ENCODE measurements at regions of chr1 and their contacts with region 1.

Region 1: GRCh38 chr1:76154206-76154956 is 79.8 kb downstream of the ST6GALNAC3 start:
- DNase-seq: peak; percentile 3
- H3K4me3 ChIP-seq: no peak overlapping the region
- H3K27ac ChIP-seq: no peak overlapping the region
- H3K27me3 ChIP-seq: no peaks in the 10 kb centered on the region
- CTCF ChIP-seq: peak; percentile 92

Region 2: DNA sequence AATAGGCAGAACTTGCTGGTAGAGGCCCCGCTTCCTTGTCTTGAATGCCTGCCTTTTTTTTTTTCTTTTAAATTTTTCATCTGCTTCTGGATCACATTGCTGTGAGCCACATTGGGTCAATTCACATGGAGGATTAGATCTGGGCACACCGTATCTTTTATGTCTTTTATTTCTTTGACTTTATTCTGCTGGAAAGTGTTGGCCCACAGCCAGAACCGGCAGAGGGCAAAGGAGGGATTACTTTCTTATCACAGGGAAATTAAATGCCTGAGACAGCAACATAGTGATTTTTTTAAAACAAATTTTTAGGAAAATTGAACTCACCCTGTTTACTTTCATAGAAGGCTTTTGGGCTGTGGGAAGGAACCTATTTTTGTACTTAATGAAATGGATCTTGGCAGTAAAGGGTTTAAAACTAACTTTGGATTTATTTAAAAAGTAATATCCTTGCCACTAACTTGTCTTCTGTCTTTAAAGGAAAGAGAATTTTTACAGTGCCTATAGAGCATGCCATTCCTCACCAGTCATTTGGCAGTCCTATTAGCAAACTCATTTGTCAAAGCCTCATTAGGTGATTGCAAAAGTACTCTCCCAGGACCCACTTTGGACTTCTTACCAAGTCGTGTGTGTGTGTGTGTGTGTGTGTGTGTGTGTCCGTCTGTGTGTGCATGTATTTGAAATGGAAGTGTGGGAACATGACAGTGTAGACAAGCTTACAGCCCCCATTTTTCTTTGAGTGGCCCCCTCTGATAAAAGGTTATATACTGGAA is 11.4 kb before region 1 on chr1:
- CTCF ChIA-PET with region 1: interaction called, 20 read pairs
- POLR2A ChIA-PET with region 1: no interaction called
- DNase-seq: no peak
- H3K4me3 ChIP-seq: no peak overlapping the region
- H3K27ac ChIP-seq: no peak overlapping the region
- H3K27me3 ChIP-seq: no peaks in the 10 kb centered on the region
- CTCF ChIP-seq: no peak

Region 3: DNA sequence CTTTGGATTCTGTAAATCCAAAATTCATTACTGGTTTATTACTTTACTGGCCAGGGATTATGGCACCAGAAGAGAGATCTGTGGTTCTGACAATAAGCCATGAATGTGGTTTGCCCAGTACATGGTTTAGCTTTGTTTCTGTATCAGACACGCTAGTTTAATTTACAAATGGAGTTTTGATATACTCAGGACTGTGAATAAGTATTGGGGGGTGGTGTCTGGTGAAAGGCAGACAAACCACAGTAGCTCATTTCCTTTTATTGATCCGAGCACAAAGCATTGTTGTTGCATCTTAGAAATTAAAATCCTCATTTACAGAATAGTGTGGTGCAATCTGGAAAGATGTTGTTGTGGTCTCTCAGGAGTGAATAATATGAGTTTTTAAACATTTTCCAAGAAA is 16.1 kb after region 1 on chr1:
- CTCF ChIA-PET with region 1: interaction called, 15 read pairs
- POLR2A ChIA-PET with region 1: no interaction called
- DNase-seq: no peak
- H3K4me3 ChIP-seq: no peak overlapping the region
- H3K27ac ChIP-seq: no peak overlapping the region
- H3K27me3 ChIP-seq: no peaks in the 10 kb centered on the region
- CTCF ChIP-seq: no peak

Region 4: DNA sequence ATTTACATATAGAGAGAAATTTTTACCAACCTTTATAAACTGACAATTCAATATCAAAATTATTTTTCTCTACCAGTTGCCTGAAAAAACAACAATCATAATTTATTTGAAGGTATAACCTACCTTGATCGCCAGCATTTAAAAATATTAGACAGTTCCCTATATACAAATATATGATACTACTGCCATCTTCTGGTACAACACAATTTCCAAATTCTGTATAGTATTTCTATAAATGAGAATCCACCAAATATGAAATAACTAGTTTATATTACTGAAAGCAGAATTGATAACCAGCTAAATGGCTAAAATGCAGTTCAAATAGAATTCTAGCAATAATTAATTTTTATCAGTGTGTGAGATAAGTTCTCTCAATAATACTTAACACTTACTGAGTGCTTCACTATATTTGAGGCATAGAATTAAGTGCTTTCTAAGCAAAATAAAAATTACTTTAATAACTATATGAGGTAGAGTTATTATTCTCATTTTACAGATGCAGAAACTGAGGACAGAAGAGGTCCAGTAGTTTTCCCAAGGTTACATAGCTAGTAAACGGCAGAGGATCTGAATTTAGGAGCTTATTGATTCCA is 989.2 kb after region 1 on chr1:
- CTCF ChIA-PET with region 1: interaction called, 28 read pairs
- POLR2A ChIA-PET with region 1: no interaction called
- DNase-seq: no peak
- H3K4me3 ChIP-seq: no peak overlapping the region
- H3K27ac ChIP-seq: no peak overlapping the region
- H3K27me3 ChIP-seq: no peaks in the 10 kb centered on the region
- CTCF ChIP-seq: peak; percentile 35

Measured in AG04450 (cell line).